PC-9 (cell line): ENCODE measurements at regions of chr5 and their contacts with region 1.

Region 1: GRCh38 chr5:31531888-31532710 is at the starts of genes C5orf22 and DROSHA:
- DNase-seq: peak; percentile 98 to 100
- H3K4me3 ChIP-seq: peak within 1 kb of the TSS; percentile 92
- H3K27ac ChIP-seq: peak within 1 kb of the TSS; percentile 35
- H3K4me1 ChIP-seq: peaks cover 28% of the 10 kb centered on the region
- H3K27me3 ChIP-seq: no peaks in the 10 kb centered on the region
- CTCF ChIP-seq: no peak; the same call in 1 of the 2 replicates
- total RNA-seq, gene C5orf22: 35.2 and 46.7 TPM in 2 replicates
- total RNA-seq, gene DROSHA: 154 and 162 TPM in 2 replicates

Region 2: GRCh38 chr5:32092938-32093812 is 561.1 kb after region 1 on chr5:
- CTCF ChIA-PET with region 1: no interaction called
- POLR2A ChIA-PET with region 1: no interaction called
- intact Hi-C with region 1: loop called (anchors 1 kb)
- DNase-seq: peak; percentile 63 to 75
- H3K4me3 ChIP-seq: no peak overlapping the region
- H3K27ac ChIP-seq: no peak overlapping the region
- H3K4me1 ChIP-seq: no peaks in the 10 kb centered on the region
- H3K27me3 ChIP-seq: no peaks in the 10 kb centered on the region
- CTCF ChIP-seq: peak; percentile 93

Region 3: GRCh38 chr5:32369542-32370155 is 837.5 kb after region 1 on chr5:
- CTCF ChIA-PET with region 1: no interaction called
- POLR2A ChIA-PET with region 1: no interaction called
- intact Hi-C with region 1: loop called (anchors 10 kb)
- DNase-seq: no peak
- H3K4me3 ChIP-seq: no peak overlapping the region
- H3K27ac ChIP-seq: no peak overlapping the region
- H3K4me1 ChIP-seq: no peaks in the 10 kb centered on the region
- H3K27me3 ChIP-seq: no peaks in the 10 kb centered on the region
- CTCF ChIP-seq: no peak

Region 4: DNA sequence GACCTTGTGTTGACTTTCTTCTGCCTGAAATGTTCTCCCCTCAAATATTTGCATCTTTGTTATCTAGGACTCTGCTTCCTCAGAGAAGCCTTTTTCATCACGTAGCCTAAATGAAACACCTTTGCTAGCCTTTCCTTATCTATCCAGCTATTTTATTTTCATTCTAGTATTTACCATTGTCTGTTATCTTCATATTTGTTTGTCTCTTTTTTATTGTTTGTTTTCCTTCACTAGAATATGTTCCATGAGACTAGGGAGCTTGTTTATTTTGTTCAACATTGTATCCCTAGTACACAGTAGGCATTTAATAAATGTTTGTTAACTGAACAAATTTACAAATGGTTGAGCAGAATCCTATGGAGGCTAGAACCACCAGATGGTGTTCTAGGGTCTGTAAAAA is 1357.0 kb after region 1 on chr5:
- CTCF ChIA-PET with region 1: no interaction called
- POLR2A ChIA-PET with region 1: no interaction called
- intact Hi-C with region 1: no loop called
- DNase-seq: no peak
- H3K4me3 ChIP-seq: no peak overlapping the region
- H3K27ac ChIP-seq: no peak overlapping the region
- H3K4me1 ChIP-seq: no peaks in the 10 kb centered on the region
- H3K27me3 ChIP-seq: no peaks in the 10 kb centered on the region
- CTCF ChIP-seq: no peak